Dorsolateral prefrontal cortex (tissue), 120 donors: ENCODE measurements at regions of chr6 and their contacts with region 1.

Region 1: GRCh38 chr6:63352587-63353285 is 33.0 kb upstream of the LGSN start:
- DNase-seq: no peak
- H3K4me3 ChIP-seq: peak overlapping the region in 2 of 59 donors; percentile 21 to 34
- H3K27ac ChIP-seq: peak overlapping the region in 2 of 59 donors; percentile 43 to 53
- H3K27me3 ChIP-seq: no peaks in the 10 kb centered on the region
- CTCF ChIP-seq: peak in 53 of 56 donors; percentile 25 to 70 (median 51)

Region 2: DNA sequence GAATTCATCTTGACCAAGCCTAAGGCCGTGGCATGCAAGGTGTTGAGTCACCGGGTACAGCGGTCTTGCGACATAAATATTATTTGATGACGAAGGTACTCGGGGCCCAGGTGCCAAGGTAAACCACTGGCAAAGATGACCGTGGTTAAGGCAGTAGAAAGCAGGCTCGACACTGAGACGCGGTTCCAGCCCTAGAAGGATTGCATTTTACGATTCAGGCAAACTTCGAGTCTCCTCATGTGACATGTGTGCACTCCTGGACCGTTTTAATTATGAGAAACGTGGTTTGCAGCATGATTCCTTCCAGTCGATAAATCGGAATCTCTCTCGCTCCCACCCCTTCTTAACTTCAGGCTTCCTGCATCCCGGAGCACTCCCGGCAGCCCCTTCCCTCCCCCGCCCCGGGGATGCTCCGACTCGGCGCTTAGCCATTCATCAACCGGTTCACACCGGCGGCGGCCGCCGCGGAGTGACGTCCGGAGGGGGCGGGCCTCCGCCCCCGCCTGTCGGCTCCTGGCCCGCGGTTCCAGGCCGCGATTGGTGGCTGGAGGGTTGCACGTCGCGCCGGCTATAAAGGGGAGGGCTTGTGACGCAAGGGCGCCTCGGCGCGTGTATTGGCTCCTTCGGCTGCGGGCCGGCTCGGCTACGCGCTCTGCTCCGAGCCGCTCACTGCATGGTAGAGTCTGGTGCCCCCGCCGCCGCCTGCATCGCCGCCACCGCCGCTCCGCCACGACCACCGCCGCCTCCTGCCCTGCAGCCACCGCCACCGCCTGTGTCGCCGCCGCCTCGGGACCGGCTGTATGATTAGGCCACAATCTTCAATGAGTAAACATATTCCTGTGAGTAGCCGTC is 219.4 kb after region 1 on chr6 and contains the starts of genes LOC128125822 and PTP4A1:
- intact Hi-C with region 1: loop called (anchors 2 to 10 kb)
- DNase-seq: peak; percentile 98 to 99 (median 98)
- H3K4me3 ChIP-seq: peak within 1 kb of the TSS; percentile 65 to 100 (median 90)
- H3K27ac ChIP-seq: peak within 1 kb of the TSS; percentile 79 to 100 (median 98)
- H3K27me3 ChIP-seq: no peaks in the 10 kb centered on the region
- CTCF ChIP-seq: peak in 10 of 56 donors; percentile 5 to 33 (median 15)
- total RNA-seq, gene PTP4A1: 17.6 to 85.2 (median 40.6) TPM

Region 3: DNA sequence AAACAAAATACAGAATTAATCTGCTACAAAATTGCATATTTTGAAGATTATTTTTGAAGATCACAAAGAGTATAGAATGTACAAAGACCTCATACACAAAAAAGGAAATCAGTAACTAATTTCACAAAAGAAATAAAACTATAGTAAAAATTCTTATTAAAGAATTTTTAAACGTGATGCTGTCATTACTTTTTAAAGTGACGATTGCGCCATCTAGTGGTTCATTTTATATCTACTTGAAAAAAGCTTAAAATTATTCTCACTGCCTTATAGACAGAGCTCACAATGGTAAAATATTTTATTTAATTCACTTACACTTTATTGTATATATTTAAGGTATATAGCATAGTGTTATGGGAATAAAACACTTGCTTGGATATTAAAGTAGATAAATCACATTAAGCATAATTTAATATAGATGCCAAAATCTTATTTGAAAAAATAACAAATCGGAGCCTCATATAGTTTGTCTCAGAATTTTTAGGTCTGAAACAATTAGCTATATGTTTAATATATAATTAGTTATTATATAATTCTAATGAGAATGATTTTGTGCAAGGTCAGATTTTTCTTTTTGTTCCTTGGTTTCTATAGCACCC is 411.7 kb after region 1 on chr6:
- intact Hi-C with region 1: loop called in 1 of 2 experiments (anchors 2 kb)
- DNase-seq: no peak
- H3K4me3 ChIP-seq: no peak overlapping the region
- H3K27ac ChIP-seq: no peak overlapping the region
- H3K27me3 ChIP-seq: no peaks in the 10 kb centered on the region
- CTCF ChIP-seq: peak; percentile 55 to 94 (median 82)

Region 4: DNA sequence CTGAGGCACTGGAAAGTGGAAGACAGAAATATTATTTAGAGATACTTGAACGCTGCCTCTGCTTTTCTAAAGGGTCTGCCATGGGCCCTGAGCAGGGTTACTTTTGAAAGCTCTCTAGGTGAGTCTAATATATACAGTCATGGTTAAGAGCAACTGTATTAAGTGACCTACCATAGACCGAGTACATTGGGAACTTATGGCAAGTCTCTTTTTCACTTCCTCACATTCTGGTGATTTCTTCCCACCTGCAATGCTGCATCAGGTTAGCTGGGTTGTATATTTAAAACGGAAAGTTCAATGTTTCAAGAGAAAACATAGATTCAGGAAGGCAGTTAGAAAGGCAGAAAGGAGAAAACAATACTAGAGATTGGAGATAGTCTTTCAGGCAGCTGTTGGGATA is 437.6 kb after region 1 on chr6:
- intact Hi-C with region 1: loop called in 1 of 2 experiments (anchors 10 kb)
- DNase-seq: no peak
- H3K4me3 ChIP-seq: no peak overlapping the region
- H3K27ac ChIP-seq: no peak overlapping the region
- H3K27me3 ChIP-seq: peaks cover 0 to 33% (median 0%) of the 10 kb centered on the region in 45 donors
- CTCF ChIP-seq: no peak